ENCODE measurements at regions of chr1 and their contacts with region 1.

Region 1: GRCh38 chr1:40257688-40258444 is at the start of gene ZMPSTE24:
- DNase-seq: peak; percentile 94 to 99 (median 96)
- H3K4me3 ChIP-seq: peak within 1 kb of the TSS; percentile 44 to 83 (median 78)
- H3K27ac ChIP-seq: peak within 1 kb of the TSS; percentile 83 to 96 (median 88)
- H3K4me1 ChIP-seq: peaks cover 17 to 43% of the 10 kb centered on the region in 2 donors
- H3K27me3 ChIP-seq: no peaks in the 10 kb centered on the region
- CTCF ChIP-seq: no peak
- POLR2A ChIP-seq: peak; percentile 28 to 67
- total RNA-seq, gene ZMPSTE24: 36.1 to 68.5 (median 42.6) TPM

Region 2: DNA sequence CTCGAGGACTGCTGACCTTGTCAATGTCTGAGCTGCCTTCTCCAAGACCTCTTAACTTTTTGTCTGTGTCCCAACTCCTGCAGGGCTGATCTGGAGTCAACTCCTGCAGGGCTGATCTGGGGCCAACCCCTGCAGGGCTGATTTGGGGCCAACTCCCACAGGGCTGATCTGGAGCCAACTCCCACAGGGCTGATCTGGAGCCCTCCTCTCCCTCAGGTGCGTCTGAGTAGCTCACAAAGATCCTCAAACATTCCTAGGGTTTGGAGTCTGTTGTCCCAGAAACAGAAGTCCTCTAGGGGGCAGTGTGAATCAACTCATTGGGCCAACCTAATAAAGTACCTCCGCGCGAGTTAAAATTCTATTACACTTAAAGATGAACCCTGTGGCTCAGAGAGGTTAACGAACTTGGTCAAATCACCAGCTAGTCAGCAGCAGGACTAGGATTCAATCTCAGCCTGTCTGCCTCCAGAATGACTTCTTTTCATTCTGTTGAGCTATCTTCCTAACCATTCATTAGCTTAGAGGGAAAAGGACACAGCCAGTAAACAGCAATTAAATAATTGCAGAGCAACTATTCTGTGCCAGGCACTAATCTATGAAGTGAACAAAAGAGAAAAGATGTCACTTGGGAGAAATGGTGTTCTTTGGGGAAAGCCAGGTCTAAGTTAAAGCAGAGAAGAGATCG is 113.8 kb before region 1 on chr1:
- intact Hi-C with region 1: no loop called
- DNase-seq: peak; percentile 50 to 76 (median 66)
- H3K4me3 ChIP-seq: no peak overlapping the region
- H3K27ac ChIP-seq: no peak overlapping the region
- H3K4me1 ChIP-seq: no peaks in the 10 kb centered on the region
- H3K27me3 ChIP-seq: peaks cover 4% of the 10 kb centered on the region
- CTCF ChIP-seq: peak; percentile 68 to 83 (median 74)
- POLR2A ChIP-seq: no peak

Region 3: GRCh38 chr1:40161125-40161887 is 96.6 kb before region 1 on chr1 and contains the start of gene RLF:
- intact Hi-C with region 1: loop called in 1 of 2 experiments (anchors 10 kb)
- DNase-seq: peak; percentile 94 to 98 (median 96)
- H3K4me3 ChIP-seq: peak within 1 kb of the TSS; percentile 47 to 99 (median 93)
- H3K27ac ChIP-seq: peak within 1 kb of the TSS; percentile 94 to 99 (median 98)
- H3K4me1 ChIP-seq: peaks cover 31 to 38% of the 10 kb centered on the region in 2 donors
- H3K27me3 ChIP-seq: no peaks in the 10 kb centered on the region
- CTCF ChIP-seq: peak in 1 of 6 experiments; percentile 10
- POLR2A ChIP-seq: peak; percentile 85 to 93
- total RNA-seq, gene RLF: 5.3 to 18.8 (median 11.7) TPM

Measured in adrenal gland (tissue), 19 donors.